B cell (primary cell): ENCODE measurements at regions of chr16 and their contacts with region 1.

Region 1: GRCh38 chr16:67561824-67562525 is 351 bp upstream of the CTCF start:
- DNase-seq: peak; percentile 99
- ATAC-seq: peak; percentile 74
- H3K4me3 ChIP-seq: peak overlapping the region; percentile 50 to 76 (median 60)
- H3K4me3 Mint-ChIP-seq: peak overlapping the region; percentile 89
- H3K27ac ChIP-seq: peak overlapping the region; percentile 71 to 80
- H3K27ac Mint-ChIP-seq: peak overlapping the region; percentile 95
- H3K4me1 ChIP-seq: peaks cover 42 to 55% of the 10 kb centered on the region in 2 donors
- H3K4me1 Mint-ChIP-seq: peaks cover 50% of the 10 kb centered on the region
- H3K27me3 ChIP-seq: no peaks in the 10 kb centered on the region
- H3K27me3 Mint-ChIP-seq: no peaks in the 10 kb centered on the region
- CTCF ChIP-seq: no peak

Region 2: DNA sequence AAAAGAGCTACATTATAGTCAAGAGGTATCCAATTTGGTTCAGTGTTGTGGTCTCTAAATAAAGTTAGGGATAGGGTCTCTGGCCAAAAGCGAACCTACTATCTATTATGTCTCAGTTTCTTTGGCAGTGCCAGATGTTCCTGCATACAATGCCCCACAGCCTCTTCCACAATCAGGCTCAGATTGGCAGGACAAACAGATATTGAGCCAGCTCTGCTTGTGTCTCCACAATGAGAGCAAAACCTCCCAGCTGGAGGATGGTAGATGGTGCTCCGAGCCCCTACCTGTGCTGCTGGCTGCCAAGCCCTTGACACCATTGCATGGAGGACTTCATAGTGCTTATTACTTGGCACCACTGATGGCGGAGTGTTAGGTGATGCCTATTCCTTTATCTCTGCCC is 432.6 kb before region 1 on chr16:
- CTCF ChIA-PET with region 1: no interaction called
- POLR2A ChIA-PET with region 1: no interaction called
- intact Hi-C with region 1: no loop called
- DNase-seq: no peak
- ATAC-seq: no peak
- H3K4me3 ChIP-seq: no peak overlapping the region
- H3K4me3 Mint-ChIP-seq: no peak overlapping the region
- H3K27ac ChIP-seq: no peak overlapping the region
- H3K27ac Mint-ChIP-seq: no peak overlapping the region
- H3K4me1 ChIP-seq: no peaks in the 10 kb centered on the region
- H3K4me1 Mint-ChIP-seq: no peaks in the 10 kb centered on the region
- H3K27me3 ChIP-seq: no peaks in the 10 kb centered on the region
- H3K27me3 Mint-ChIP-seq: no peaks in the 10 kb centered on the region
- CTCF ChIP-seq: no peak

Region 3: GRCh38 chr16:67506468-67506867 is 55.5 kb before region 1 on chr16:
- CTCF ChIA-PET with region 1: no interaction called
- POLR2A ChIA-PET with region 1: no interaction called
- intact Hi-C with region 1: no loop called
- DNase-seq: no peak
- ATAC-seq: no peak
- H3K4me3 ChIP-seq: no peak overlapping the region
- H3K4me3 Mint-ChIP-seq: peak overlapping the region; percentile 48
- H3K27ac ChIP-seq: peak overlapping the region; percentile 8 to 42
- H3K27ac Mint-ChIP-seq: peak overlapping the region; percentile 54
- H3K4me1 ChIP-seq: peaks cover 34 to 46% of the 10 kb centered on the region in 2 donors
- H3K4me1 Mint-ChIP-seq: peaks cover 52% of the 10 kb centered on the region
- H3K27me3 ChIP-seq: no peaks in the 10 kb centered on the region
- H3K27me3 Mint-ChIP-seq: no peaks in the 10 kb centered on the region
- CTCF ChIP-seq: no peak

Region 4: DNA sequence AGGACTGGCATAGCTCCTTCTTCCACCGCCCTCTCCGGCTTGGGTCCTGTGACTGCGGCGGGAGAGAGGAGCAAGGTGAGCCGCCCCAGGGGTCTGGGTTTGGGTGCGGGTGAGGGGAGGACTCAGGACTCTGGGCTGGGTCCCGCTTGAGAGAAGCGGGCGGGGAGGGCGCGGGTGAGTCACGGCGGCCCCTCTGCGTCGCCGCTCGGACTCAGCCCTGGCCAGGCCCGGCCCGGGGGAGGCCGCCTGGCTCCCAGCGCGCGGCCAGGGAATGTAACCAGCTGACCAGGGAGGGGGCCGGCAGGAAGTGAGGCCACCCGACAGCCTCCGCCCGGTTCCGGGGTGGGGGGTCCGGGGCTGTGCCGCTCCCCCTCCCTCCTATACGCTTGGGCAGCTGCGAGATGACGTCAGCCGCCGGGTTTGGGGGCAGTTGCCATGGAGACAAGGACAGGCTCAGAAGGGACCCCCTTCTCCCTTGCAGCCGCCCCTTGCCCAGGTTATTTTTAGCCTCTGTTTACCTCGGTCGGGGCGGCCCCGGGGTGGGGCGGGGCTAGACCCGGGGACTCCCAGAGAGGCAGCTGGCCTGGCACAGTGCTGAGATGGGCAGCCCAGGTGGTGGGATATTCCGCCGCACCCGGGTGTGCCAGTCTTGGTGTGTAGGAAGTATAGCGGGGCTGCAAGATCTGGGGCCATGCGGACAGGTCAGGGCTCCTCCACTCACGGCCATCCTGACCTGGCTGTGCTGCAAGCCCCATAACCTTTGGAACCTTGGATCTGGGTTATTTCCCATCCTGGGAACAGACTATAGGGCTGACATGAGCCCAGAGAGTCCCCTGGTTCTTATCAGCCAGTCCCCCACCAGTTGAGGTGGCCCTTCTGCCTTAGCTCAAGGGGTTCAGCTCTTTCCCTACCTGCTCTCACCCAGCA is 31.7 kb before region 1 on chr16:
- CTCF ChIA-PET with region 1: interaction called, 42 read pairs
- POLR2A ChIA-PET with region 1: interaction called, 53 read pairs
- intact Hi-C with region 1: loop called (anchors 1 kb)
- DNase-seq: peak; percentile 94
- ATAC-seq: peak; percentile 59
- H3K4me3 ChIP-seq: peak overlapping the region; percentile 65 to 92 (median 85)
- H3K4me3 Mint-ChIP-seq: peak overlapping the region; percentile 95
- H3K27ac ChIP-seq: peak overlapping the region; percentile 96 to 100
- H3K27ac Mint-ChIP-seq: peak overlapping the region; percentile 98
- H3K4me1 ChIP-seq: peaks cover 38 to 70% of the 10 kb centered on the region in 2 donors
- H3K4me1 Mint-ChIP-seq: peaks cover 63% of the 10 kb centered on the region
- H3K27me3 ChIP-seq: no peaks in the 10 kb centered on the region
- H3K27me3 Mint-ChIP-seq: no peaks in the 10 kb centered on the region
- CTCF ChIP-seq: no peak

Region 5: GRCh38 chr16:67608364-67608763 is 46.4 kb after region 1 on chr16:
- CTCF ChIA-PET with region 1: no interaction called
- POLR2A ChIA-PET with region 1: no interaction called
- intact Hi-C with region 1: loop called (anchors 5 kb)
- DNase-seq: no peak
- ATAC-seq: no peak
- H3K4me3 ChIP-seq: no peak overlapping the region
- H3K4me3 Mint-ChIP-seq: no peak overlapping the region
- H3K27ac ChIP-seq: no peak overlapping the region
- H3K27ac Mint-ChIP-seq: no peak overlapping the region
- H3K4me1 ChIP-seq: peaks cover 4 to 5% of the 10 kb centered on the region in 2 donors
- H3K4me1 Mint-ChIP-seq: peaks cover 18% of the 10 kb centered on the region
- H3K27me3 ChIP-seq: no peaks in the 10 kb centered on the region
- H3K27me3 Mint-ChIP-seq: no peaks in the 10 kb centered on the region
- CTCF ChIP-seq: no peak

Region 6: DNA sequence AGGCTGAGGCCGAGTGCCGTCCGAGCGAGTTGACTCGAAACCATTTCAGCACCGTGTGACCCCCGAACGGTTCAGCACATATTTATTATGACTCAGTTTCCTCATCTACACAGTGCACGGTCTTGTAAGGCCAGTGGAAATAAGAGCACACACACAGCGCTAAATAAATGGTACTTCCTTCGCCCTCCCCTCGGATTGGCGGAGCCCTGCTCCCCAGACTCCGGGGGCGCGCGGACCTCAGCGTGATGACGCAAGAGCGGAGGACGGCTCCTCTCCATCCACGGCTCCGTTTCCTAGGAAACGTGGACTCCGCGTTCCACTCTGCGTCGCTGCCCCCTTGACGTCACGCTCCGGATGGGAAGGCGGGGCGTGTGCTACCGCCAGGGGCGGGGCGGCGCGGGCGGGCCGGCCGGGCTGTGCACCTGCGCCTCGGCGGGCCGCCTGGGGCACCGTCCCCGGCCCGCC is 98.6 kb after region 1 on chr16 and contains the start of gene PARD6A:
- CTCF ChIA-PET with region 1: interaction called, 15 read pairs
- POLR2A ChIA-PET with region 1: interaction called, 8 read pairs
- intact Hi-C with region 1: no loop called
- DNase-seq: peak; percentile 99
- ATAC-seq: peak; percentile 83
- H3K4me3 ChIP-seq: peak within 1 kb of the TSS; percentile 80 to 99 (median 95)
- H3K4me3 Mint-ChIP-seq: peak within 1 kb of the TSS; percentile 97
- H3K27ac ChIP-seq: peak within 1 kb of the TSS; percentile 88 to 93
- H3K27ac Mint-ChIP-seq: peak within 1 kb of the TSS; percentile 97
- H3K4me1 ChIP-seq: peaks cover 14 to 24% of the 10 kb centered on the region in 2 donors
- H3K4me1 Mint-ChIP-seq: peaks cover 35% of the 10 kb centered on the region
- H3K27me3 ChIP-seq: no peaks in the 10 kb centered on the region
- H3K27me3 Mint-ChIP-seq: no peaks in the 10 kb centered on the region
- CTCF ChIP-seq: no peak
- total RNA-seq, gene PARD6A: 13.6 and 14.8 TPM in 2 replicates

Region 7: GRCh38 chr16:67806428-67807147 is 244.6 kb after region 1 on chr16 and contains the starts of genes RANBP10 and TSNAXIP1:
- CTCF ChIA-PET with region 1: no interaction called
- POLR2A ChIA-PET with region 1: no interaction called
- intact Hi-C with region 1: loop called (anchors 1 kb)
- DNase-seq: peak; percentile 98
- ATAC-seq: peak; percentile 89
- H3K4me3 ChIP-seq: peak within 1 kb of the TSS; percentile 89 to 99 (median 92)
- H3K4me3 Mint-ChIP-seq: peak within 1 kb of the TSS; percentile 97
- H3K27ac ChIP-seq: peak within 1 kb of the TSS; percentile 78 to 80
- H3K27ac Mint-ChIP-seq: peak within 1 kb of the TSS; percentile 94
- H3K4me1 ChIP-seq: peaks cover 40 to 51% of the 10 kb centered on the region in 2 donors
- H3K4me1 Mint-ChIP-seq: peaks cover 45% of the 10 kb centered on the region
- H3K27me3 ChIP-seq: no peaks in the 10 kb centered on the region
- H3K27me3 Mint-ChIP-seq: no peaks in the 10 kb centered on the region
- CTCF ChIP-seq: no peak
- total RNA-seq, gene RANBP10: 32.2 and 33.1 TPM in 2 replicates
- total RNA-seq, gene TSNAXIP1: 1.1 and 1.2 TPM in 2 replicates